PC-3 (cell line): ENCODE measurements at regions of chr6 and their contacts with region 1.

Region 1: GRCh38 chr6:45436544-45437438 is 59.1 kb upstream of the SUPT3H start:
- DNase-seq: peak; percentile 65
- ATAC-seq: peak; percentile 57
- H3K4me3 ChIP-seq: peak overlapping the region; percentile 35
- H3K27ac ChIP-seq: peak overlapping the region; percentile 78
- H3K4me1 ChIP-seq: peaks cover 69% of the 10 kb centered on the region
- H3K27me3 ChIP-seq: no peaks in the 10 kb centered on the region
- CTCF ChIP-seq: no peak

Region 2: DNA sequence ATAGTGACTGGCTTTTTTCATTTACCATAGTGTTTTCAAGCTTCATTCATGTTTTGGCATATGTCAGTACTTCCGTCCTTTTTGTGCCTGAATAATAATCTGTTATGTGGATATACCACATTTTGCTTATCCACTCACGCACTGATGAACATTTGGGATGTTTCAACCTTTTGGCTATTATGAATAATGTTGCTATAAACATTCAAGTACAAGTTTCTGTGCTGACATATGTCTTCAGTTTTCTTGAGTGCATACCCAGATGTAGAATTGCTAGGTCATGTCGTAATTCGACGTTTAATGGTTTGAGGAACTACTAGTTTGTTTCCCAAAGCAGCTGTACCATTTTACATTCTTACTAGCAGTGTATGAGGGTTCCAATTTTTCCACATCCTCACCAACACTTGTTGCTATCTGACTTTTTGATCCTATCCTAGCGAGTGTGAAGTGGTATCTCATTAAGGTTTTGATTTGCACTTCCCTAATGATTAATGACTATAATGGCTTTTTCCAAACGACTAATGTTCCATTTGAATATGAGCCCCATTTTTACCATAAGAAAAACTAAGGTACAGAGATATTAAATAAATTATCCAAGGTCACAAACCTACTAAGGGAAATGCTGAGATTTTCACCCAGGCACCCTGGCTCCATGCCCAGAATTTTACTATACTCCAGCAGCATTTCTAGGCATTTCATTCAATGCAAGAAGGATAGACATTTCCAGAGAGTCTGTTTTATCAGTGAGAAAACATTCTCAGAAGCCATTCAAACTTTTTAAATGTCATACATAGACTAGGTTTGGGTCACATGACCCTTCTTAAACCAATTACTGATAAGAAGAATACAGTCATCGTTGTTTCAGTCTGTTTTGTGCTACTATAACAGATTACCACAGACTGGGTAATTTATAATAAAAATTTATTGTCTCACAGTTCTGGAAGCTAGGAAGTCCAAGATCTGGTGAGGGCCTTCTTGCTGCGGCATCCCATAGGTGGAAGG is 179.8 kb before region 1 on chr6:
- CTCF ChIA-PET with region 1: no interaction called
- POLR2A ChIA-PET with region 1: no interaction called
- intact Hi-C with region 1: no loop called
- DNase-seq: no peak
- ATAC-seq: no peak
- H3K4me3 ChIP-seq: no peak overlapping the region
- H3K27ac ChIP-seq: no peak overlapping the region
- H3K4me1 ChIP-seq: no peaks in the 10 kb centered on the region
- H3K27me3 ChIP-seq: no peaks in the 10 kb centered on the region
- CTCF ChIP-seq: no peak

Region 3: DNA sequence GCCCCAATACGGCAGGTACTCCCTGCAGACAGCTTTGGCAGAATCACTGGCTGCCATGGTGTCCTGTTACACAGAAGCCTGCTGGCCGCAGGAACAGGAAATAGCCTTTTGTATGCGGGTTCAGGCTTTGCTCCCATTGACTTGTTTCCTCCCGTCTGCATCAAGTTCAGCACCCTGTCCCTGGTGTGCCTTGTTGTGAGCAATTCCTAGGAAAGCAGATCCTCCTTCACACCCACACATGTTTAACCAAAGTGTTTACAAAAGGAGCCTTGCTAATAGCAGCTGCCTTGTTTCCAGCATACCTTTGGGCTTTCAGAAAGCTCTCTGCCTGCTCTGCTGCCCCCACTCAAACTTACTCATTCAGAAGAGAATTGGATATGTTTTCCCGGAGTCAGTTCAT is 68.2 kb after region 1 on chr6:
- CTCF ChIA-PET with region 1: no interaction called
- POLR2A ChIA-PET with region 1: no interaction called
- intact Hi-C with region 1: loop called (anchors 5 kb)
- DNase-seq: peak; percentile 63
- ATAC-seq: peak; percentile 77
- H3K4me3 ChIP-seq: no peak overlapping the region; the same call in 1 of the 2 replicates
- H3K27ac ChIP-seq: peak overlapping the region; percentile 94
- H3K4me1 ChIP-seq: peaks cover 41% of the 10 kb centered on the region
- H3K27me3 ChIP-seq: no peaks in the 10 kb centered on the region
- CTCF ChIP-seq: no peak

Region 4: GRCh38 chr6:45590225-45590624 is 153.4 kb after region 1 on chr6:
- CTCF ChIA-PET with region 1: no interaction called
- POLR2A ChIA-PET with region 1: no interaction called
- intact Hi-C with region 1: loop called (anchors 5 kb)
- DNase-seq: peak; percentile 93
- ATAC-seq: peak; percentile 93
- H3K4me3 ChIP-seq: no peak overlapping the region
- H3K27ac ChIP-seq: peak overlapping the region; percentile 97
- H3K4me1 ChIP-seq: peaks cover 68% of the 10 kb centered on the region
- H3K27me3 ChIP-seq: no peaks in the 10 kb centered on the region
- CTCF ChIP-seq: no peak

Region 5: GRCh38 chr6:45697605-45698004 is 260.8 kb after region 1 on chr6:
- CTCF ChIA-PET with region 1: no interaction called
- POLR2A ChIA-PET with region 1: no interaction called
- intact Hi-C with region 1: loop called (anchors 5 kb)
- DNase-seq: peak; percentile 88
- ATAC-seq: peak; percentile 80
- H3K4me3 ChIP-seq: no peak overlapping the region
- H3K27ac ChIP-seq: peak overlapping the region; percentile 85
- H3K4me1 ChIP-seq: peaks cover 17% of the 10 kb centered on the region
- H3K27me3 ChIP-seq: no peaks in the 10 kb centered on the region
- CTCF ChIP-seq: no peak

Region 6: GRCh38 chr6:46352541-46353268 is 915.9 kb after region 1 on chr6:
- CTCF ChIA-PET with region 1: no interaction called
- POLR2A ChIA-PET with region 1: no interaction called
- intact Hi-C with region 1: no loop called
- DNase-seq: peak; percentile 23
- ATAC-seq: no peak
- H3K4me3 ChIP-seq: no peak overlapping the region
- H3K27ac ChIP-seq: no peak overlapping the region
- H3K4me1 ChIP-seq: no peaks in the 10 kb centered on the region; the same call in 1 of the 2 replicates
- H3K27me3 ChIP-seq: peaks cover 14% of the 10 kb centered on the region
- CTCF ChIP-seq: no peak